Activated CD4-positive, alpha-beta T cell treated with anti-CD3 and anti-CD28 coated beads, Interleukin-2, amount 10 ng/mL, durations not matched to agents 24 days and 14 days (primary cell): ENCODE measurements at regions of chr5 and their contacts with region 1.

Region 1: GRCh38 chr5:157354800-157355199 is 88.9 kb downstream of the CYFIP2 start:
- DNase-seq: no peak
- H3K4me3 Mint-ChIP-seq: no peak overlapping the region
- H3K27ac Mint-ChIP-seq: peak overlapping the region; percentile 69
- H3K4me1 Mint-ChIP-seq: peaks cover 38% of the 10 kb centered on the region
- H3K27me3 Mint-ChIP-seq: no peaks in the 10 kb centered on the region

Region 2: DNA sequence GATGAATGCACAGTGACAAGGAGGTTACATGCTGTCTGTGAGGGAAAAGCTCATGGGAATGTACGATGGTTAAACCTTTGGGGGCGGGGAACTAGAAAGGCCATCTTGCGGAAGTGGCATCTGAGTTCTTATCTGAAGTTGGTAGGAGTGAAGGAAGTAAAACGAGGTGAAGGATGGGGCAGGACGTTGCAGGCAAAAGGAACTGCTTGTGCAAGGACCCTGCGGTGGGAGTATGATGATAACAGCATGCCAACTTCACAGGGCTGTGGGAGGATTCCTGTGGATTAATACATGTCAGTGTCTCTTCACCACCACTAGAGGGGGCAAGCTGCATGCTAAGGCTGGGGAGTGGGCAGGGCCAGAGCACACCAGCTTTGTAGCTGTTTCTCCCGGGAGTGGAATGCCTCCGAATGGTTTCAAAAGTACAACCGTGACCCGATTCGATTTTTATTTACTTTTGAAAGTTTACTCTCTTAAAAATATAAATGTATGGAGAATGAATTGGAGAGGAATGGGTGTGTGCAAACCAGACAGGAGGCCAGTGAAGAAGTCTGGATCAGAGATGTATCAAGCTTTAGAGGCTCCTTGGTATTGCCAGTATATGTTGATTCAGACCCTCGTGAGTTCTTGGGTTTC is 26.4 kb before region 1 on chr5:
- intact Hi-C with region 1: loop called (anchors 2 kb)
- DNase-seq: peak; percentile 87
- H3K4me3 Mint-ChIP-seq: peak overlapping the region; percentile 36
- H3K27ac Mint-ChIP-seq: peak overlapping the region; percentile 89
- H3K4me1 Mint-ChIP-seq: peaks cover 36% of the 10 kb centered on the region
- H3K27me3 Mint-ChIP-seq: no peaks in the 10 kb centered on the region

Region 3: GRCh38 chr5:157390551-157391297 is 35.9 kb after region 1 on chr5:
- intact Hi-C with region 1: loop called (anchors 1 kb)
- DNase-seq: peak; percentile 82
- H3K4me3 Mint-ChIP-seq: peak overlapping the region; percentile 58
- H3K27ac Mint-ChIP-seq: peak overlapping the region; percentile 95
- H3K4me1 Mint-ChIP-seq: peaks cover 24% of the 10 kb centered on the region
- H3K27me3 Mint-ChIP-seq: no peaks in the 10 kb centered on the region

Region 4: GRCh38 chr5:157731272-157732129 is 376.7 kb after region 1 on chr5 and contains the start of gene THG1L:
- intact Hi-C with region 1: loop called (anchors 2 kb)
- DNase-seq: peak; percentile 100
- H3K4me3 Mint-ChIP-seq: peak within 1 kb of the TSS; percentile 97
- H3K27ac Mint-ChIP-seq: peak within 1 kb of the TSS; percentile 98
- H3K4me1 Mint-ChIP-seq: peaks cover 25% of the 10 kb centered on the region
- H3K27me3 Mint-ChIP-seq: no peaks in the 10 kb centered on the region
- total RNA-seq, gene THG1L: 25.0 and 26.7 TPM in 2 replicates